Activated CD8-positive, alpha-beta T cell treated with anti-CD3 and anti-CD28 coated beads for 36 hours (primary cell): ENCODE measurements at regions of chr12 and their contacts with region 1.

Region 1: DNA sequence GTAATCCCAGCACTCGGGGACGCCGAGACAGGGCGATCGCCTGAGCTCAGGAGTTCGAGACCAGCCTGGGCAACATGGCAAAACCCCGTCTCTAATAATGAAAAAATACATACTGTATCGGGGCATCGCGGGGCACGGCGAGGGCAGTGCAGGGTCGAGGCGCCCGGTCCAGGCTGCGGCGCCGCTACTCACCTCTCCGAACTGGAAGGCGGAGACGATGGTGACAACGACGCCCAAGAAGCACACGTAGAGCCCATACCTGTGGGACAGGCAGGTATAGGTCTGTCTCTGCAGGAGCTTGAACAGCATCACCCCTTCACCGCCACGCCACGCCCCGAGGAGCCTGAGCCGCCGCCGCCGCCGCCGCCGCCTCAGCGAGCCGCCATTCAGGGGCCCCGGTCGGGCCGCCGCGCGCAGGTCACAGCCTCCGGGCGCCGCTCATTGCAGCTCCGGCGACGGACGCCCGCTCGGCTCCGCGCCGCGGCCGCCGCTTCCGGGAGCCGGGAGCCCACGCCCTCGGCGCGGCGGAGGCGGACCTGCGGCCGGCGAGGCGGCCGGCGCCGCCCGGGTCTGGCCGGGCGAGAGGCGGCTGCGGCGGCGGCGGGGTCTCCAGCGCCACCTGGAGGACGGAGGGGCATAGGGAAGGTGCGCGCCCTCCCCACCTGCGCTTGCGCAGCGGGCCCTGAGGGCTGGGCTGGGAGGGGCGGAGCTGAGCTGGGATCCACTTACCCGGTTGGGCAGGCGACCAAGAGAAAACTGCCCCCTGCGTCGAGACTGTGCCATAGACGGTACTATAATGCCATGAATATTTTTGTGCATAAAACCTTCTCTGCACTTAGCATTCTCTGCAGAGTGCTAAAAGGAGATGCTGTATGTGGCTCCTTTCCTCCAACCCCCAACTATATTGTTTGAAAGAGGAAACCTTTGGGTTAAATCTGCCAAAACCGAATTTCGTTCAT is at the start of gene GNPTAB:
- DNase-seq: peak; percentile 97
- ATAC-seq: peak; percentile 97
- H3K4me3 Mint-ChIP-seq: peak within 1 kb of the TSS; percentile 98
- H3K27ac Mint-ChIP-seq: peak within 1 kb of the TSS; percentile 92
- H3K4me1 Mint-ChIP-seq: peaks cover 37% of the 10 kb centered on the region
- H3K27me3 Mint-ChIP-seq: no peaks in the 10 kb centered on the region
- CTCF ChIP-seq: peak; percentile 65
- total RNA-seq, gene GNPTAB: 52.4 to 56.9 TPM

Region 2: DNA sequence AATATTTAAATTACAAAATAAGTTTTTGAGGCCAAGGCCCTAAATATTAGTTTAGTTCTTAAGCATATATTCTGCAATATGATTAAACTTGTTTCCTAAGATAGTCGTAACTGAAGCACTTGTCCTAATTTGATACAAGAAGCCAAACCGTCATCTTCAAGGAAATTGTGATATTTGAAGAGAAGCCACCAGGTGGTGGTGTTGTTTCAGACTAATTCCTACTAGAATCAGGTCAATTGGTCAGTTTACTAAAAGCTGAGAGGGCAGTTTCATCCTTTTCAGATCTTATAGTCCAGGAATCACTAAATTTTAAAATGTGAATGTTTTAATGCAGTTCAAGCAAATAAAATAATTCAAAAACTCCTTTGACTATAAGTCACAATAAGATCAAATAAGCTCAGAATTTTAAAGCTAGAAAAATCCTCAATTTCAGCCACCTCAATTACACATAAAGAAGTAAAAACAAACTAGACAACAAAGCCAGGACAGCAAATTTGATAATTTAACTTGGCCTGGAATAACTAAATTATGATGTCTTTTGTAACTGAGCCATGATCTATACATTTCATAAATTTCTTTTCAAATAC is 416.0 kb before region 1 on chr12:
- CTCF ChIA-PET with region 1: interaction called, 4 read pairs
- POLR2A ChIA-PET with region 1: no interaction called
- intact Hi-C with region 1: loop called (anchors 10 kb)
- DNase-seq: peak; percentile 35
- ATAC-seq: no peak
- H3K4me3 Mint-ChIP-seq: no peak overlapping the region
- H3K27ac Mint-ChIP-seq: no peak overlapping the region
- H3K4me1 Mint-ChIP-seq: peaks cover 2% of the 10 kb centered on the region
- H3K27me3 Mint-ChIP-seq: peaks cover 8% of the 10 kb centered on the region
- CTCF ChIP-seq: peak; percentile 82

Region 3: GRCh38 chr12:101733166-101733565 is 97.5 kb before region 1 on chr12:
- CTCF ChIA-PET with region 1: no interaction called
- POLR2A ChIA-PET with region 1: no interaction called
- intact Hi-C with region 1: no loop called
- DNase-seq: no peak
- ATAC-seq: no peak
- H3K4me3 Mint-ChIP-seq: no peak overlapping the region
- H3K27ac Mint-ChIP-seq: no peak overlapping the region
- H3K4me1 Mint-ChIP-seq: no peaks in the 10 kb centered on the region
- H3K27me3 Mint-ChIP-seq: no peaks in the 10 kb centered on the region
- CTCF ChIP-seq: no peak

Region 4: GRCh38 chr12:101759396-101760047 is 71.1 kb before region 1 on chr12:
- CTCF ChIA-PET with region 1: interaction called, 10 read pairs
- POLR2A ChIA-PET with region 1: no interaction called
- intact Hi-C with region 1: no loop called
- DNase-seq: no peak
- ATAC-seq: peak; percentile 70
- H3K4me3 Mint-ChIP-seq: no peak overlapping the region
- H3K27ac Mint-ChIP-seq: no peak overlapping the region
- H3K4me1 Mint-ChIP-seq: no peaks in the 10 kb centered on the region
- H3K27me3 Mint-ChIP-seq: no peaks in the 10 kb centered on the region
- CTCF ChIP-seq: peak; percentile 72

Region 5: DNA sequence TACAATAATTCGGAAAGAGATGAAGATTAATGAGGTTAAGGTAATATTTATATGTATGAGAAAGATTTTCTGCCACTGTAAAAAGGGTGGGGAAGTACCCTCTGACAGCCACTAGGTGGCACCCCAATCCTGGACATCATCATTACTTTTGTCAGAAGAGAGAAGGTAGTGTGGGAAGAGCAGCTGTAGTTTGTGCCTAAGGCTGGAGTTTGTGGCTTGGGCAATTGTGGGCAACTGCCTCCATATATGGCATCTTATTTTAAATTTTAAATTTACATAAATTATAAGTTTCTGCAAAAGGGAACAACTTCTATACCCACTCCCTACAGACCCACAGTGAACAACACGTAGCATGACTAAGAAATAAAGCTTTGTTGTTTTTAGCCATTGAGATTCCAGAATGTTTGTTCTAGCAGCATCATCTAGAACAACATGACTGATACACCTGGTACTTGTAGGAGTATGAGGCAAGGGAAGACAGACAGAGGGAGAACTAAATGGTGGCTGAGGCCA is 56.9 kb before region 1 on chr12:
- CTCF ChIA-PET with region 1: interaction called, 199 read pairs
- POLR2A ChIA-PET with region 1: interaction called, 7 read pairs
- intact Hi-C with region 1: loop called (anchors 2 kb)
- DNase-seq: peak; percentile 72
- ATAC-seq: peak; percentile 95
- H3K4me3 Mint-ChIP-seq: no peak overlapping the region
- H3K27ac Mint-ChIP-seq: no peak overlapping the region
- H3K4me1 Mint-ChIP-seq: peaks cover 4% of the 10 kb centered on the region
- H3K27me3 Mint-ChIP-seq: no peaks in the 10 kb centered on the region
- CTCF ChIP-seq: peak; percentile 86

Region 6: GRCh38 chr12:101782273-101782731 is 48.3 kb before region 1 on chr12:
- CTCF ChIA-PET with region 1: interaction called, 104 read pairs
- POLR2A ChIA-PET with region 1: interaction called, 16 read pairs
- intact Hi-C with region 1: no loop called
- DNase-seq: peak; percentile 55
- ATAC-seq: peak; percentile 77
- H3K4me3 Mint-ChIP-seq: peak overlapping the region; percentile 1
- H3K27ac Mint-ChIP-seq: peak overlapping the region; percentile 90
- H3K4me1 Mint-ChIP-seq: peaks cover 25% of the 10 kb centered on the region
- H3K27me3 Mint-ChIP-seq: no peaks in the 10 kb centered on the region
- CTCF ChIP-seq: no peak

Region 7: DNA sequence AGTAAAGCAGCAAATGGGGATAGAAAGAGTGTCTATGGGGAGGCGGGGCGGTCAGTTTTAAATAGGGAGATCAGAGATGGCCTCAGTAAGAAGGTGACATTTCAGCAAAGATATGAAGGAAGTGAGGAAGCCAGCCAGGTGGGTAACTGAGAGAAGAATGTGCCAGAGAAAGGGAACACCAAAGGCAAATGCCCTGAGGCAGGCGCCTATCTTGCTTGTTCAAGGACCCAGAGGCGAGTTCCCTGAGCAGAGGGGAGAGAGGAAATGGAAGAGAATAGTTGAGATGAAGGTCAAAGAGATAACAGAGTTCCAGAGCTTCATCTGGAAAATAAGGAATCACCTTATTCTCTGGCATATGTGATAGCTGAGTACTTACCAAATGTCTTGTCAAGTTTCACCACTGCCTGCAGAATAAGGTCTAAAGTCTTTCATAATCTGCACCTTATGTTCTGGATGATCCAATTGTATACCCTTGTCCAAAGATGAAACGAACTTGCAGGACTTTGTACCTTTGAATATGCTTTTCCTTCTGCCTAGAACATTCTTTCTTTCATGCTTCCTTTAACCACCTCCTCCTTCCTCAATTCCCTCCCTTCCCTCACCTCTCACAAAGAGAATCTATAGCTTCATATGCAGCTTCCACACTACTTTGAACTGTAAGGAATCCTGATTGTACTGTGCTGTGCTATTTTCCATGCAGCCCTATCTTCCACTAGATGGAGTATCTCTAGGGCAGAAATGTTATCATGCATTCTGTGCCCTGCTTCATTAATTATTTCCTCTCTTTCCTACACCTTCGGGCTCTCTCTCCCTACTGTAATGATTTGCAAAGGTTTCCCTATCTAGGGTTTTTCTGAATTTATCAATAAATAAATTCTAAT is 38.4 kb before region 1 on chr12:
- CTCF ChIA-PET with region 1: interaction called, 141 read pairs
- POLR2A ChIA-PET with region 1: interaction called, 11 read pairs
- intact Hi-C with region 1: no loop called
- DNase-seq: no peak
- ATAC-seq: no peak
- H3K4me3 Mint-ChIP-seq: no peak overlapping the region
- H3K27ac Mint-ChIP-seq: peak overlapping the region; percentile 83
- H3K4me1 Mint-ChIP-seq: peaks cover 45% of the 10 kb centered on the region
- H3K27me3 Mint-ChIP-seq: no peaks in the 10 kb centered on the region
- CTCF ChIP-seq: no peak

Region 8: GRCh38 chr12:101799774-101800173 is 30.9 kb before region 1 on chr12:
- CTCF ChIA-PET with region 1: interaction called, 141 read pairs
- POLR2A ChIA-PET with region 1: interaction called, 11 read pairs
- intact Hi-C with region 1: no loop called
- DNase-seq: no peak
- ATAC-seq: peak; percentile 65
- H3K4me3 Mint-ChIP-seq: peak overlapping the region; percentile 24
- H3K27ac Mint-ChIP-seq: peak overlapping the region; percentile 73
- H3K4me1 Mint-ChIP-seq: peaks cover 58% of the 10 kb centered on the region
- H3K27me3 Mint-ChIP-seq: no peaks in the 10 kb centered on the region
- CTCF ChIP-seq: no peak

Region 9: GRCh38 chr12:102107970-102108369 is 277.3 kb after region 1 on chr12:
- CTCF ChIA-PET with region 1: no interaction called
- POLR2A ChIA-PET with region 1: no interaction called
- intact Hi-C with region 1: no loop called
- DNase-seq: no peak
- ATAC-seq: no peak
- H3K4me3 Mint-ChIP-seq: no peak overlapping the region
- H3K27ac Mint-ChIP-seq: peak overlapping the region; percentile 15
- H3K4me1 Mint-ChIP-seq: peaks cover 8% of the 10 kb centered on the region
- H3K27me3 Mint-ChIP-seq: no peaks in the 10 kb centered on the region
- CTCF ChIP-seq: no peak